Posterior cingulate gyrus (tissue), 11 donors: ENCODE measurements at regions of chr1 and their contacts with region 1.

Region 1: GRCh38 chr1:24847995-24848881 is 81.8 kb downstream of the RUNX3 start:
- DNase-seq: peak; percentile 82 to 99 (median 92)

Region 2: GRCh38 chr1:24769656-24770651 is 78.3 kb before region 1 on chr1:
- intact Hi-C with region 1: no loop called
- DNase-seq: no peak

Region 3: GRCh38 chr1:24897767-24898483 is 49.7 kb after region 1 on chr1:
- intact Hi-C with region 1: loop called (anchors 5 kb)
- DNase-seq: peak in 4 of 10 donors; percentile 37 to 81 (median 51)

Region 4: GRCh38 chr1:25100151-25100833 is 252.1 kb after region 1 on chr1:
- intact Hi-C with region 1: loop called (anchors 2 kb)
- DNase-seq: no peak

Region 5: GRCh38 chr1:25204797-25205480 is 356.7 kb after region 1 on chr1:
- intact Hi-C with region 1: loop called (anchors 1 kb)
- DNase-seq: peak in 1 of 10 donors; percentile 15